ENCODE measurements at regions of chr2 and their contacts with region 1.

Region 1: GRCh38 chr2:149561309-149561926 is 26.2 kb downstream of the MMADHC start:
- DNase-seq: peak in 4 of 5 donors; percentile 35 to 45 (median 40)
- H3K4me3 ChIP-seq: no peak overlapping the region
- H3K4me3 Mint-ChIP-seq: no peak overlapping the region
- H3K27ac ChIP-seq: no peak overlapping the region
- H3K27ac Mint-ChIP-seq: no peak overlapping the region
- H3K4me1 ChIP-seq: no peaks in the 10 kb centered on the region
- H3K4me1 Mint-ChIP-seq: peaks cover 0 to 3% (median 1%) of the 10 kb centered on the region in 4 donors
- H3K27me3 ChIP-seq: no peaks in the 10 kb centered on the region
- H3K27me3 Mint-ChIP-seq: peaks cover 1 to 2% of the 10 kb centered on the region in 2 donors

Region 2: DNA sequence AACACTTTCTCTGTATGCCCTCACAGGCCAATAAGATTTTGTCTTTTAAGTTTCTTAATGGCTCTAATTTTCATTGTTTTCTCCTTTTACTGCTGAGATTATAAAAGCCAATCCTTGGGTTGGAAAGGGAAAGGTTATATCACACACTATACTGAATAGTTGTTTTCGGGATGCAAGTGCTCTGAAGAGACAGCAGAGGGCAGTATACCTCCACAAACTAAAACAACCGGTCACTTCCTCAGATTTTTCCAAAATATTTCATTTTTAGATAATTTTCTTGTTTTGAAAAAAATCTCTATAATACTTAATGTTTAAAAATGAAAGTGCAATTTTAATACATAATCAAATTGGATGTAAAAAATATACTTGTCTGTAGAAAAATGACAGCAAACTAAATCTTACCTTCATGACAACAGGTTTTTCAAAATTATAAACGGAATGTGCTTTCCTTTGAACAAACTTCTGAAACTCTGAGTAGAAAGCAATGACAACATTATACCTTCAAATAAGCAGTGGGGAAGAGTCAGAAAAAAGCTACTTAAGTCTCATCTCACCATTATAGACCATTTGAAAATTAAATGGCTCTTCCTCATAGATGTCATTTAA is 1623.6 kb before region 1 on chr2:
- CTCF ChIA-PET with region 1: interaction called, 3 read pairs
- POLR2A ChIA-PET with region 1: interaction called, 3 read pairs
- intact Hi-C with region 1: loop called (anchors 1 kb)
- DNase-seq: peak in 4 of 5 donors; percentile 23 to 37 (median 28)
- H3K4me3 ChIP-seq: no peak overlapping the region
- H3K4me3 Mint-ChIP-seq: no peak overlapping the region
- H3K27ac ChIP-seq: no peak overlapping the region
- H3K27ac Mint-ChIP-seq: peak overlapping the region in 1 of 7 donors; percentile 13
- H3K4me1 ChIP-seq: no peaks in the 10 kb centered on the region
- H3K4me1 Mint-ChIP-seq: peaks cover 0 to 1% (median 0%) of the 10 kb centered on the region in 4 donors
- H3K27me3 ChIP-seq: no peaks in the 10 kb centered on the region
- H3K27me3 Mint-ChIP-seq: no peaks in the 10 kb centered on the region

Region 3: DNA sequence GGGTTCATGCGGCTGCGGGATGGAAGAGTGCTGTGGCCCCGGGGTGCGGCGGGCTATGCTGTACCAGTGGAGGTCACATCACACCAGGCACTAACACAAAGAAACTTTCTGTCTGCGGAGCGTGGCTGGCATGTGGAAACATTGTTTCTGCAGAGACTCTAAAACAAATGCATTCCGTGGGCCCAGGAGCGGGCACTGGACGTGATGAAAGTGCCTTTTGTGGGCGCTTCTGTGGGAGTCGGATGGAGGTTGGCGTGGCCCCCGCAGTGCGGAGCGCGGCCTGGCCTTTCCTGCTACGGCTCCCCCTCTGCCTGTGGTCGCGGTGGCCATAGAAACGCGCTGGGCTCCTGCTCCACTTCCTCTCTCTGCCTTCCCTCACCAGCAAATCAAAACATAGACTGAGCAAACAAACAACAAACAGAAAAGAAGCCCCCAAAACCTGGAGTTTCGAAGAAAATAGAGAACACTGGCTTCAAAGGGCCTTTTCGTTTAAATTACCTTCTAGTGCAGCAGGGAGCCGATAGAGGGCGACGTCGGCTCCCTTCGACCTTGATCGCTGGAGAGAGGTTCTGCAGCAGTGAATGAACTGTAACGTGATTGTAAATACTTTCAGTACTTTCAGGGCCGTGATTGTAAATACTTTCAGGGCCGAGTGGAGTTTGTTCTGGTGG is 635.0 kb before region 1 on chr2:
- CTCF ChIA-PET with region 1: interaction called, 4 read pairs
- POLR2A ChIA-PET with region 1: no interaction called
- intact Hi-C with region 1: loop called (anchors 5 kb)
- DNase-seq: peak; percentile 43 to 59 (median 56)
- H3K4me3 ChIP-seq: peak overlapping the region in 1 of 2 donors; percentile 39
- H3K4me3 Mint-ChIP-seq: peak overlapping the region; percentile 84 to 95 (median 88)
- H3K27ac ChIP-seq: peak overlapping the region; percentile 25
- H3K27ac Mint-ChIP-seq: peak overlapping the region; percentile 72 to 94 (median 93)
- H3K4me1 ChIP-seq: peaks cover 20% of the 10 kb centered on the region
- H3K4me1 Mint-ChIP-seq: peaks cover 16 to 30% (median 21%) of the 10 kb centered on the region in 4 donors
- H3K27me3 ChIP-seq: no peaks in the 10 kb centered on the region
- H3K27me3 Mint-ChIP-seq: no peaks in the 10 kb centered on the region

Region 4: DNA sequence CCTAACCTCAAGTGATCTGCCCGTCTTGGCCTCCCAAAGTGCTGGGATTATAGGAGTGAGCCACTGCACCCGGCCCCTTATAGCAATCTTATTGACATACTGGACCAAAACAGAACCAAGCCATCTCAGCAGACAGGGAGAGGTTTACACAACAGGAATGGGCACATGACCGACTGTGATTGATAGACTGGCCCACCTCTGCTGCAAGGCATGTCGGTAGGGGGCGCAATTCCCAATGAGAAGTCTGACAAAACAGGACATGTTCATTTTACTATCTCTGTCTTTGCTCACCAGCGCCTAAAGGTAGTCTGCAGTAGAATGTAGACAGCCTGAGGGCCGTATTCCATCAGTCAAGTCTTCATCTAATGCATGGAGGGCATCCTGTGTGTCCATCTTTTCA is 521.0 kb before region 1 on chr2:
- CTCF ChIA-PET with region 1: interaction called, 7 read pairs
- POLR2A ChIA-PET with region 1: no interaction called
- intact Hi-C with region 1: loop called (anchors 1 kb)
- DNase-seq: peak in 4 of 5 donors; percentile 28 to 36 (median 34)
- H3K4me3 ChIP-seq: no peak overlapping the region
- H3K4me3 Mint-ChIP-seq: peak overlapping the region in 1 of 8 donors; percentile 63
- H3K27ac ChIP-seq: no peak overlapping the region
- H3K27ac Mint-ChIP-seq: no peak overlapping the region
- H3K4me1 ChIP-seq: no peaks in the 10 kb centered on the region
- H3K4me1 Mint-ChIP-seq: peaks cover 0 to 5% (median 0%) of the 10 kb centered on the region in 4 donors
- H3K27me3 ChIP-seq: peaks cover 10% of the 10 kb centered on the region
- H3K27me3 Mint-ChIP-seq: peaks cover 25 to 36% of the 10 kb centered on the region in 2 donors

Region 5: DNA sequence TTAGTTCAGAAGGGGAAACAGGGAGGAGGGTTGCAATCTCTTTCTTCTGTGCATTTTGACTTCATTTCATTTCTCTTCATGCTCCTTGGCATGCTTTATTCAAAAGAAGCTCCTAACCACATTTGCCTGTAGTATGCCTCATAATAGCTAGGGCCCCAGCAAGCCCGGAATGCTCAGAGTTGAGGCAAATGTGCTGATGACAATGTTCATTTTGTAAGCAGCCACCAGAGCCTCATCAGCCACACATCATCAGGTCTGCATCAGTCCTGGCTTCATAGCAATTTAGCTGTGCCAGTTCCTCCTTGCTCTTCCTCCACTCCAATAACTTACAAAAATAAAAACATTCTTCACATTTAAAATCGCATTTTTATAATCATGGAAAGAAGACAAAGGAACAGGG is 91.5 kb after region 1 on chr2:
- CTCF ChIA-PET with region 1: no interaction called
- POLR2A ChIA-PET with region 1: no interaction called
- intact Hi-C with region 1: no loop called
- DNase-seq: no peak
- H3K4me3 ChIP-seq: no peak overlapping the region
- H3K4me3 Mint-ChIP-seq: no peak overlapping the region
- H3K27ac ChIP-seq: no peak overlapping the region
- H3K27ac Mint-ChIP-seq: no peak overlapping the region
- H3K4me1 ChIP-seq: no peaks in the 10 kb centered on the region
- H3K4me1 Mint-ChIP-seq: no peaks in the 10 kb centered on the region
- H3K27me3 ChIP-seq: no peaks in the 10 kb centered on the region
- H3K27me3 Mint-ChIP-seq: peaks cover 3% of the 10 kb centered on the region in 2 donors

Measured in CD4-positive, alpha-beta memory T cell (primary cell).